Activated CD4-positive, alpha-beta memory T cell treated with anti-CD3 and anti-CD28 coated beads for 36 hours (primary cell): ENCODE measurements at regions of chr5 and their contacts with region 1.

Region 1: GRCh38 chr5:132064738-132065331 is 4.4 kb downstream of the IL3 start:
- DNase-seq: peak; percentile 90
- H3K4me3 Mint-ChIP-seq: peak overlapping the region; percentile 11
- H3K27ac Mint-ChIP-seq: peak overlapping the region; percentile 7
- H3K4me1 Mint-ChIP-seq: peaks cover 22% of the 10 kb centered on the region
- H3K27me3 Mint-ChIP-seq: no peaks in the 10 kb centered on the region

Region 2: GRCh38 chr5:131796793-131797693 is 267.8 kb before region 1 on chr5 and contains the start of gene FNIP1:
- CTCF ChIA-PET with region 1: interaction called, 4 read pairs
- POLR2A ChIA-PET with region 1: no interaction called
- intact Hi-C with region 1: loop called (anchors 5 kb)
- DNase-seq: peak; percentile 99
- H3K4me3 Mint-ChIP-seq: peak within 1 kb of the TSS; percentile 97
- H3K27ac Mint-ChIP-seq: peak within 1 kb of the TSS; percentile 84
- H3K4me1 Mint-ChIP-seq: peaks cover 33% of the 10 kb centered on the region
- H3K27me3 Mint-ChIP-seq: no peaks in the 10 kb centered on the region
- total RNA-seq, gene FNIP1: 14.0 to 15.9 TPM

Region 3: DNA sequence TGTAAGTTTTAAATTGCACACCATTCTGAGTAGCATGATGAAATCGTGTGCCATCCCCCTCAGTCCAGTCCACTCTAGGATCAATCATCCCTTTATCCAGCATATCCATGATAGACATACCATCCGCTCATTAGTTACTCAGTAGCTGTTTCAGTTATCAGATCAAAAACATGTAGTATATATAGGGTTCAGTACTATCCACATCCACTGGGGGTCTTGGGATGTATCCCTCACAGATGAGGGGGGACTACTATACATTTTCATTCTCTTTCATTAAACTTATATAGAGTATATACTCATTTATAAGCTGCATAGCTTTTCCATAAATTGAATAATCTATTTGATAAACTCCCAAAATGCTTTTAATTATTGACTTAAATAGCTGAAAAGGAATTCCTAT is 187.0 kb before region 1 on chr5:
- CTCF ChIA-PET with region 1: no interaction called
- POLR2A ChIA-PET with region 1: no interaction called
- intact Hi-C with region 1: no loop called
- DNase-seq: no peak
- H3K4me3 Mint-ChIP-seq: no peak overlapping the region
- H3K27ac Mint-ChIP-seq: no peak overlapping the region
- H3K4me1 Mint-ChIP-seq: no peaks in the 10 kb centered on the region
- H3K27me3 Mint-ChIP-seq: no peaks in the 10 kb centered on the region

Region 4: DNA sequence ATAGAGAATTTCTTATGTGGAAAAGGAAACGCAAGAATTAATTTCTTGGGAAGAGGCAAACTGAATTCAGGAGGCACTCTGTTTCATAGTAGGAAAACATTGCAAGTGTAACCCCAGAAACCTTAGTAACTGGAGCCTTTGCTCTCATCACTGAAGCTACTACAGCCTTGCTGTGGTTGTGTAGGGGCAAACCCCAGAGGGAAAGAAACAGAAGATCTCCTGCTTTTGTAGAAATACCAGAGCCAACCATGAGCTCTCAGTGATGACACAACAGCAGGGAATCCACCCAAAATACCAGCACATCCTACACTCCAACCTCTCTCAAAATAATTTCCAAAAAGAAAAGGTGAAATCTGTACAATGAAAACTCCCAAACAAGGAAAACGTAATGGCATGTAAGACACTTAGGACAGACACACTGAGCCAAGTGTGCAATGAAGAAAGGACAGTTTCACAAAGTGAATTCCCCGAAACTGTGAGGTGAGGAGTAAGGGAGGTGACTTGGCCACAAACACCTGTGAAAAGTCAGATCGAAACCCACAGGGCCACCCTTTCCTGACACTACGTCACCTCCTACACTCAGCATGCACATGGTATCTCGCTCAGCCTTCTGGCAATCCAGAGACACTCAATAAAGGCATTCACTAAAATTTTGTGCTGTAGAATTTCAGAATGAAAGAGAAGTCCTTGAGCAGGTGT is 44.8 kb before region 1 on chr5:
- CTCF ChIA-PET with region 1: interaction called, 8 read pairs
- POLR2A ChIA-PET with region 1: no interaction called
- intact Hi-C with region 1: loop called (anchors 1 kb)
- DNase-seq: peak; percentile 91
- H3K4me3 Mint-ChIP-seq: peak overlapping the region; percentile 11
- H3K27ac Mint-ChIP-seq: peak overlapping the region; percentile 90
- H3K4me1 Mint-ChIP-seq: peaks cover 52% of the 10 kb centered on the region
- H3K27me3 Mint-ChIP-seq: peaks cover 22% of the 10 kb centered on the region

Region 5: GRCh38 chr5:132103332-132103951 is 38.6 kb after region 1 on chr5:
- CTCF ChIA-PET with region 1: interaction called, 13 read pairs
- POLR2A ChIA-PET with region 1: no interaction called
- intact Hi-C with region 1: loop called (anchors 1 kb)
- DNase-seq: peak; percentile 84
- H3K4me3 Mint-ChIP-seq: peak overlapping the region; percentile 38
- H3K27ac Mint-ChIP-seq: peak overlapping the region; percentile 86
- H3K4me1 Mint-ChIP-seq: peaks cover 74% of the 10 kb centered on the region
- H3K27me3 Mint-ChIP-seq: no peaks in the 10 kb centered on the region

Region 6: GRCh38 chr5:132190161-132190817 is 125.5 kb after region 1 on chr5:
- CTCF ChIA-PET with region 1: interaction called, 21 read pairs
- POLR2A ChIA-PET with region 1: no interaction called
- intact Hi-C with region 1: no loop called
- DNase-seq: no peak
- H3K4me3 Mint-ChIP-seq: no peak overlapping the region
- H3K27ac Mint-ChIP-seq: no peak overlapping the region
- H3K4me1 Mint-ChIP-seq: peaks cover 7% of the 10 kb centered on the region
- H3K27me3 Mint-ChIP-seq: peaks cover 8% of the 10 kb centered on the region

Region 7: DNA sequence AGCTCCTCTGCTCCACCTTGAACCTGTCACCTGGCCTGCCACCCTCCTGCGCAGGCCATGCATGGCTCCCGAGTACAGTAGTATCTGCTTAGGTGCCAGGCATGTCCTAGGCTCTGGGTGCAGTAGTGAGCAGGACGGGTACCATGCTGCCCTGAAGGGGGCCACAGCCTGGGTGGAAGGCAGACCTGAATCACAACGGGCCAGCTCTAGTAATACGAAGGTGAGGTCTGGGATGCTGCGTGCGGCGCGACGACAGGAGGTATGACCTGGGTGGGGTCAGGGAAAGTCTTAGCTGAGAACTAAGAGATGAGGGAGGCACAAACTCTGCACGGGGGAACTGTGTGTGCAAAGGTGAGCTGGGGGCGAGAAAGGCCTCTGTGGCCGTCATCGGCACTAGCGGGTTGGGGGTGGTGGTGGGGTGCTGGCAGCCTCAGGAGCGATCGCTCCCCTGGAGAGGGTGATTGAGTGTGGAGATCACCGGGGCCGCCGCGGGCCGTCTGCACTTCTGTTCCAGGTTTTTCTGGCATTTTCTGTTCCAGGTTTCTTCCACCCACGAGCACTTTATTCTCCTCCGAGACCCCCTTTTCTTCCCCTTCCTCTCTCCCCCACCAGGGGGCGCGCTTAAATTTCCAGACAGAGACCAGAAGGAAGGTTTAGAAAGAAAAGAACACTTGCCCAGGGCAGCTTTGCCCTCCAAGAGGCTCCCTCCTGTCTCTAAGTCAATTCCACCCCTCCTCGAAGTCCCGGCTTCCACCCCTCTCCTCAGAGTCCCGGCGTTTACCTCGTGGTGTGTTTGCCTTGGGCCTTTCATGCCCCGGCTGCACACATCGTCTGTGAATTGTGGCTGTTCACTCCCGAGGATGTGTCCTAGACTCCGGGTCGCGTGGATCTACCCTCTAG is 207.7 kb after region 1 on chr5:
- CTCF ChIA-PET with region 1: interaction called, 4 read pairs
- POLR2A ChIA-PET with region 1: no interaction called
- intact Hi-C with region 1: loop called (anchors 1 kb)
- DNase-seq: peak; percentile 81
- H3K4me3 Mint-ChIP-seq: no peak overlapping the region
- H3K27ac Mint-ChIP-seq: no peak overlapping the region
- H3K4me1 Mint-ChIP-seq: peaks cover 8% of the 10 kb centered on the region
- H3K27me3 Mint-ChIP-seq: peaks cover 12% of the 10 kb centered on the region